ENCODE measurements at regions of chr11 and their contacts with region 1.

Region 1: GRCh38 chr11:68051191-68052144 is 12.6 kb downstream of the TCIRG1 start:
- DNase-seq: peak in 1 of 2 experiments; percentile 69
- H3K4me3 ChIP-seq: no peak overlapping the region
- H3K27ac ChIP-seq: no peak overlapping the region
- H3K4me1 ChIP-seq: peaks cover 0 to 10% (median 6%) of the 10 kb centered on the region in 4 experiments; a peak in 5 of 7 replicates
- H3K27me3 ChIP-seq: no peaks in the 10 kb centered on the region
- CTCF ChIP-seq: no peak
- EP300 ChIP-seq: no peak
- POLR2A ChIP-seq: no peak
- RAD21 ChIP-seq: no peak

Region 2: DNA sequence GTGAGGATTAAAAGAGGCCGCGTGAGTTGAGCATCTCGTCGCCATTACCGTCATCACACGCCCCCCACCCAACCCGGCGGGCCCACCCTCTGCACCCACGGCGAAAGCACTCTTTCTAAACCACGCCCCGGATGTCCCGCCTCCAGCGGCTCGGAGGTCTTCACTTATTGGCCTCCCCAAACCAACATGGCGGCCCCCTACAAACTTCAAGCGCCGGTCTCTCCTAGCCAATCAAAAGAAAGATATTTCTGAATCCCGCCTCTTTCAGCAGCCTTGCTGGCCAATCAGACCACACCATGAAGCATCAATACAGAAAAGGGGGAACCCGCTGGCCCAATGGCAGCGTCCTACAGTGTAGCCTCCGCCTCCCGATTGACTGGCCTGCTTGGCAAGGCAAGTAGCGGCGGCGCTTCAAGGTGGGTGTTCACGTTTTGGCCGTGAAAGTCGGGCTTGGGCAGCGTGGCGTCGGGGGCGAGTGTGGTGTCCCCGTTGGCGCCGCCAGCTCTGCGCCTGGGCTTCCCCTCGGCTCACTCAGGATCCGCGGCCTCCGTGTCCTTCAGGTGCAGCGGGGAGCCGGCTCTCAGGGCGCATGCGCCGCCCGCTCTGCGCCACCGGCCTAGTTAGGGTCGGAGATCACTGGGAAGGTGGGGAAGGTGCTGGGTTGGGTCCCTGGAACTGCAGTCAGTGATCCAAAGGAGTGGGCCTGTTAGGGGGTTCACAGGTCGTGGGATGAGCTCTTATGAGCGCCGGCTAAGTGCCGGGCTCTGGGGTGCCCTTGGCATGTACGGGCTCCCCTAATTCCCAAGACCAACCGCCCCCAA is 20.9 kb before region 1 on chr11 and contains the start of gene NDUFS8:
- CTCF ChIA-PET with region 1: interaction called, 4 read pairs
- POLR2A ChIA-PET with region 1: interaction called, 183 read pairs
- DNase-seq: peak; percentile 95 to 96
- H3K4me3 ChIP-seq: peak within 1 kb of the TSS; percentile 79 to 82 (median 80)
- H3K27ac ChIP-seq: peak within 1 kb of the TSS; percentile 83
- H3K4me1 ChIP-seq: peaks cover 0 to 8% (median 6%) of the 10 kb centered on the region in 4 experiments; a peak in 5 of 7 replicates
- H3K27me3 ChIP-seq: no peaks in the 10 kb centered on the region
- CTCF ChIP-seq: no peak
- EP300 ChIP-seq: no peak
- POLR2A ChIP-seq: peak in 1 of 2 experiments; percentile 64; a peak in 2 of 3 replicates
- RAD21 ChIP-seq: no peak
- total RNA-seq, gene NDUFS8: 182 and 199 TPM in 2 replicates

Region 3: GRCh38 chr11:68038718-68039525 is 12.5 kb before region 1 on chr11 and contains the start of gene TCIRG1:
- CTCF ChIA-PET with region 1: interaction called, 18 read pairs
- POLR2A ChIA-PET with region 1: interaction called, 183 read pairs
- DNase-seq: peak; percentile 47 to 77
- H3K4me3 ChIP-seq: peak within 1 kb of the TSS; percentile 22 to 66 (median 42)
- H3K27ac ChIP-seq: 0 out of 2 replicates have a peak within 1 kb of the TSS, but pooled peaks have one; percentile 24
- H3K4me1 ChIP-seq: peaks cover 4 to 25% (median 20%) of the 10 kb centered on the region in 4 experiments
- H3K27me3 ChIP-seq: no peaks in the 10 kb centered on the region
- CTCF ChIP-seq: peak in 1 of 3 experiments; percentile 5; a peak in 1 of 4 replicates
- EP300 ChIP-seq: no peak
- POLR2A ChIP-seq: peak in 1 of 2 experiments; percentile 46; a peak in 2 of 3 replicates
- RAD21 ChIP-seq: no peak
- total RNA-seq, gene TCIRG1: 25.3 and 25.7 TPM in 2 replicates

Measured in H1 (cell line).